ENCODE measurements at regions of chr6 and their contacts with region 1.

Region 1: DNA sequence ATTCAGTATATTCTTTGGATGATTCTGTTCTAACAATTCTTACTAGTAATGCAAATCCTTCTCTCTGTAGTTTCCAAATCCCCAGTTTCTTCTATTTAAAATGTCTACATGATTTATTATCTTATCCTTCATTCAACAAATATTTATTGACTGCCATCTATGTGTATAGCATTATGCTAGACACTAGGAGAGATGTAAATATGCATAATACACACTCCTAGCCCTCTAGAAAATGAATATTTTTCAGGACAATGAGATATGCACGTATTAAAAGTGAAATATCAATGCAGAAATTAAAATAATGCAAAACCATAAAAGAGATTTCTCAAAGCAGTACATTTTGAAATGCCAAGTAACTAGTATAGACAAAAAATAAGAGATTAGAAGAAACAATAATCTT is 293.5 kb upstream of the CNR1 start:
- DNase-seq: no peak
- H3K4me3 ChIP-seq: no peak overlapping the region
- H3K27ac ChIP-seq: no peak overlapping the region
- H3K4me1 ChIP-seq: no peaks in the 10 kb centered on the region
- H3K27me3 ChIP-seq: peaks cover 30% of the 10 kb centered on the region
- CTCF ChIP-seq: no peak

Region 2: GRCh38 chr6:87066449-87067333 is 1393.0 kb before region 1 on chr6:
- CTCF ChIA-PET with region 1: no interaction called
- POLR2A ChIA-PET with region 1: no interaction called
- intact Hi-C with region 1: loop called (anchors 10 kb)
- DNase-seq: peak; percentile 77
- H3K4me3 ChIP-seq: no peak overlapping the region
- H3K27ac ChIP-seq: no peak overlapping the region
- H3K4me1 ChIP-seq: no peaks in the 10 kb centered on the region
- H3K27me3 ChIP-seq: no peaks in the 10 kb centered on the region
- CTCF ChIP-seq: peak; percentile 76

Region 3: DNA sequence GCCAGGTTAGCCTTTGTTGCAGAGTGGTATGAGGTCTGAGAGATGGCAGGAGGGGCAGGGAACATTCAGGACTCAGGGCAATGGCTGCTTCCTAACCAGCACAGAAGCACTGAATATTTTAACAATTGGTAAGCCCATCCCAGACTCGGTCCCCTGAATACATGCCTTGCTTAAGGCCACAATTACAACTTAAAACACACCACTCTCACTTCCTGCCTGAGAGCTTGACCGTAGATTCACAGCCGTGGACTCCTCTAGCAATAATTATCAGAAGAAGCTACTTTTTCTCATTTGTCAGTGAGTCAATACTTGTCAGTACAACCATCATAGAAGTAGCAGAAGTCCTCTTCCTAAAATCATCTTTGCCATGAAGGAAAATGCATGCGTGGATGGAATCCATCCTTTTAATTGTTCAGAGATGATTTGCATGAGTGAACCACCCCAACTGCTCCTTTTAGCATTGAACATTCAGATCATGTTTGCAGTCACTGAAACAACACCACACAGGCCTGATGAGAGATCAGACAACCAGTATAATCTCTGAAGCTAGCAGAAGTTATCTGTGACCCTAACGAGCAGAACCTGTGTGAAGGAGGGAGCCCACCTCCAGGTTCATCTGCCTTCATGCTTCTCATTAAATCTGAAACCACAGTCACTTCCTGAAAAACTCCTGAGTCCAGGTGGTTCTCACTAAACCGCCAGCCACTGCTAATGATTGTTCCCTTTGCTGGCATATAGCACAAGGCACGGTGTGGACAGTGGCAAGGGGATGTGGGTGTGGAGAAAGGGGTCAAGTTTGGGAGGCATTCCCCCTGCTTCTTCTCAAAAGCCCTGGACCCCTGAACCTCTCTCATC is 40.4 kb after region 1 on chr6:
- CTCF ChIA-PET with region 1: no interaction called
- POLR2A ChIA-PET with region 1: no interaction called
- intact Hi-C with region 1: no loop called
- DNase-seq: no peak
- H3K4me3 ChIP-seq: no peak overlapping the region
- H3K27ac ChIP-seq: no peak overlapping the region
- H3K4me1 ChIP-seq: no peaks in the 10 kb centered on the region
- H3K27me3 ChIP-seq: no peaks in the 10 kb centered on the region
- CTCF ChIP-seq: no peak